Right cardiac atrium (tissue), 5 donors: ENCODE measurements at regions of chr14 and their contacts with region 1.

Region 1: GRCh38 chr14:103391048-103391447 is 5.8 kb downstream of the MARK3 start:
- DNase-seq: no peak
- ATAC-seq: peak in 1 of 2 donors; percentile 31
- H3K4me3 ChIP-seq: no peak overlapping the region
- H3K27ac ChIP-seq: peak overlapping the region; percentile 13
- H3K4me1 ChIP-seq: peaks cover 12% of the 10 kb centered on the region
- H3K27me3 ChIP-seq: no peaks in the 10 kb centered on the region

Region 2: GRCh38 chr14:102717276-102717675 is 673.8 kb before region 1 on chr14:
- intact Hi-C with region 1: loop called in 1 of 4 experiments (anchors 10 kb)
- DNase-seq: no peak
- ATAC-seq: no peak
- H3K4me3 ChIP-seq: no peak overlapping the region
- H3K27ac ChIP-seq: no peak overlapping the region
- H3K4me1 ChIP-seq: no peaks in the 10 kb centered on the region
- H3K27me3 ChIP-seq: no peaks in the 10 kb centered on the region

Region 3: GRCh38 chr14:103444837-103445524 is 53.9 kb after region 1 on chr14:
- intact Hi-C with region 1: loop called in 3 of 4 experiments (anchors 10 kb)
- DNase-seq: no peak
- ATAC-seq: peak; percentile 69 to 77
- H3K4me3 ChIP-seq: no peak overlapping the region
- H3K27ac ChIP-seq: peak overlapping the region; percentile 58
- H3K4me1 ChIP-seq: peaks cover 4% of the 10 kb centered on the region
- H3K27me3 ChIP-seq: no peaks in the 10 kb centered on the region

Region 4: DNA sequence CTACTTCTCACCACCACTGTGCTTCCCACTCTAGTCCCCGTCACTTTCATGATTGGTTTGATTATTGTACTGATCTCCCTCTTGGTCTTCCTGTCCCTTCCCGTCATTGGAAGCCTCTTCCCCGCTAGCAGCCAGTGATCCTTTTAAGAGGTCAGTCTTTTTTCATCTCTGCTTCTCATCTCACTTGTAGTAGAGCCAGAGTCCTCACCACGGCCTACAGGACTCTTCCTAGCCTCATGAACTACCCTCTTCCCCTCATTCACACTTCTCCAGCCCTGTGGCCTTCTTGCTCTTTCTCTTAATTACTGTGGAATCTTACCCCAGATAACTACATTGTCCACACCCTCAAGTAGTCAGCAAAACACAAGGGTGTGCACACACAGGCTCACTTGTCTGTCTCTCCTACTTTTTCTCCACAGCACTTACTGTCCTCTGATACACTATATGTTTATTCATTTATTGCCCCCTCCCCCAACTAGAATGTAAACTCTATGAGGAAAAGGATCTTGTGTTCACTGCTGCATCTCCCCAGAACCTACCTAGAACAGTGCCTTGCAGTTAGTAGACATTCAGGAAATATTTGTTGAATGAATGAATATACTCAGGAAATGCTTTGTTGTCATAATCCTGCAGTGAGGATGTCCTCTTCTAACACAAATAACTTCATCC is 65.3 kb after region 1 on chr14:
- intact Hi-C with region 1: loop called in 1 of 4 experiments (anchors 10 kb)
- DNase-seq: no peak
- ATAC-seq: peak in 1 of 2 donors; percentile 51
- H3K4me3 ChIP-seq: no peak overlapping the region
- H3K27ac ChIP-seq: no peak overlapping the region
- H3K4me1 ChIP-seq: peaks cover 8% of the 10 kb centered on the region
- H3K27me3 ChIP-seq: no peaks in the 10 kb centered on the region